Activated CD4-positive, alpha-beta T cell treated with anti-CD3 and anti-CD28 coated beads, Interleukin-2, amount 10 ng/mL, durations not matched to agents 24 days and 14 days (primary cell): ENCODE measurements at regions of chr3 and their contacts with region 1.

Region 1: GRCh38 chr3:137509355-137510045 is 254.6 kb upstream of the SOX14 start:
- DNase-seq: no peak
- H3K4me3 Mint-ChIP-seq: no peak overlapping the region
- H3K27ac Mint-ChIP-seq: no peak overlapping the region
- H3K4me1 Mint-ChIP-seq: no peaks in the 10 kb centered on the region
- H3K27me3 Mint-ChIP-seq: no peaks in the 10 kb centered on the region

Region 2: GRCh38 chr3:137468446-137468845 is 41.1 kb before region 1 on chr3:
- intact Hi-C with region 1: no loop called
- DNase-seq: no peak
- H3K4me3 Mint-ChIP-seq: no peak overlapping the region
- H3K27ac Mint-ChIP-seq: no peak overlapping the region
- H3K4me1 Mint-ChIP-seq: no peaks in the 10 kb centered on the region
- H3K27me3 Mint-ChIP-seq: no peaks in the 10 kb centered on the region

Region 3: DNA sequence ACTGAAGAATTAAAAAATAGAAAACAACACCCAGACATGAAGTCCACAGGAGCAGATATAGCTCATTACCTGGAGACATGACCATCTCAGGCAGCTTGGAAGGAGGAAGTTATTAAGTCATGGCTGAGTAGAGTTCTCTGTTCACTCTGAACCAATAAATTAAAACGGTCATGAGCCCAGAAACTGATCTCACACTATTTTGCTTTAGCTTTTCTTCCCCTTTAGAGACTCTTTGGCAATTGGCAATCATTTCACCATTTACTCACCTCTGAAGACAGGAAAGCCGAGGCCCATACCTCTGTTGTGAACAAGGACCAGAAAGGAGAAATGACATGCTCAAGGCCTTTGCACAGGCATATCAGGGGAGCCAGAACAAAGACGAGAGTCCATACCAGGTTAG is 527.1 kb after region 1 on chr3:
- intact Hi-C with region 1: loop called (anchors 5 kb)
- DNase-seq: no peak
- H3K4me3 Mint-ChIP-seq: no peak overlapping the region
- H3K27ac Mint-ChIP-seq: no peak overlapping the region
- H3K4me1 Mint-ChIP-seq: no peaks in the 10 kb centered on the region
- H3K27me3 Mint-ChIP-seq: peaks cover 35% of the 10 kb centered on the region